ENCODE measurements at regions of chr6 and their contacts with region 1.

Region 1: GRCh38 chr6:33711140-33712129 is at the start of gene UQCC2:
- DNase-seq: peak; percentile 95 to 96
- H3K4me3 ChIP-seq: peak within 1 kb of the TSS; percentile 68
- H3K4me3 Mint-ChIP-seq: peak within 1 kb of the TSS; percentile 93
- H3K27ac Mint-ChIP-seq: peak within 1 kb of the TSS; percentile 100
- H3K4me1 ChIP-seq: peaks cover 15% of the 10 kb centered on the region
- H3K4me1 Mint-ChIP-seq: peaks cover 14% of the 10 kb centered on the region
- H3K27me3 ChIP-seq: no peaks in the 10 kb centered on the region
- H3K27me3 Mint-ChIP-seq: no peaks in the 10 kb centered on the region
- CTCF ChIP-seq: peak; percentile 41 to 83
- total RNA-seq, gene UQCC2: 115 and 122 TPM in 2 replicates

Region 2: GRCh38 chr6:33579828-33580714 is 131.4 kb before region 1 on chr6 and contains the start of gene BAK1:
- CTCF ChIA-PET with region 1: interaction called, 11 read pairs
- POLR2A ChIA-PET with region 1: interaction called, 8 read pairs
- intact Hi-C with region 1: no loop called
- DNase-seq: peak; percentile 89 to 92
- H3K4me3 ChIP-seq: peak within 1 kb of the TSS; percentile 65
- H3K4me3 Mint-ChIP-seq: peak within 1 kb of the TSS; percentile 84
- H3K27ac Mint-ChIP-seq: peak within 1 kb of the TSS; percentile 53
- H3K4me1 ChIP-seq: peaks cover 10% of the 10 kb centered on the region
- H3K4me1 Mint-ChIP-seq: no peaks in the 10 kb centered on the region
- H3K27me3 ChIP-seq: no peaks in the 10 kb centered on the region
- H3K27me3 Mint-ChIP-seq: no peaks in the 10 kb centered on the region
- CTCF ChIP-seq: peak; percentile 55 to 72
- total RNA-seq, gene BAK1: 28.5 and 29.4 TPM in 2 replicates

Region 3: GRCh38 chr6:33700391-33701050 is 10.9 kb before region 1 on chr6:
- CTCF ChIA-PET with region 1: interaction called, 17 read pairs
- POLR2A ChIA-PET with region 1: interaction called, 5 read pairs
- intact Hi-C with region 1: no loop called
- DNase-seq: peak; percentile 74 to 77
- H3K4me3 ChIP-seq: no peak overlapping the region
- H3K4me3 Mint-ChIP-seq: no peak overlapping the region
- H3K27ac Mint-ChIP-seq: no peak overlapping the region
- H3K4me1 ChIP-seq: no peaks in the 10 kb centered on the region
- H3K4me1 Mint-ChIP-seq: no peaks in the 10 kb centered on the region
- H3K27me3 ChIP-seq: no peaks in the 10 kb centered on the region
- H3K27me3 Mint-ChIP-seq: no peaks in the 10 kb centered on the region
- CTCF ChIP-seq: peak; percentile 64 to 85

Region 4: GRCh38 chr6:33751771-33752645 is 40.6 kb after region 1 on chr6:
- CTCF ChIA-PET with region 1: interaction called, 18 read pairs
- POLR2A ChIA-PET with region 1: interaction called, 6 read pairs
- intact Hi-C with region 1: no loop called
- DNase-seq: peak; percentile 77 to 89
- H3K4me3 ChIP-seq: no peak overlapping the region
- H3K4me3 Mint-ChIP-seq: no peak overlapping the region
- H3K27ac Mint-ChIP-seq: no peak overlapping the region
- H3K4me1 ChIP-seq: peaks cover 30% of the 10 kb centered on the region
- H3K4me1 Mint-ChIP-seq: peaks cover 33% of the 10 kb centered on the region
- H3K27me3 ChIP-seq: no peaks in the 10 kb centered on the region
- H3K27me3 Mint-ChIP-seq: peaks cover 3% of the 10 kb centered on the region
- CTCF ChIP-seq: peak in 1 of 2 experiments; percentile 28

Region 5: DNA sequence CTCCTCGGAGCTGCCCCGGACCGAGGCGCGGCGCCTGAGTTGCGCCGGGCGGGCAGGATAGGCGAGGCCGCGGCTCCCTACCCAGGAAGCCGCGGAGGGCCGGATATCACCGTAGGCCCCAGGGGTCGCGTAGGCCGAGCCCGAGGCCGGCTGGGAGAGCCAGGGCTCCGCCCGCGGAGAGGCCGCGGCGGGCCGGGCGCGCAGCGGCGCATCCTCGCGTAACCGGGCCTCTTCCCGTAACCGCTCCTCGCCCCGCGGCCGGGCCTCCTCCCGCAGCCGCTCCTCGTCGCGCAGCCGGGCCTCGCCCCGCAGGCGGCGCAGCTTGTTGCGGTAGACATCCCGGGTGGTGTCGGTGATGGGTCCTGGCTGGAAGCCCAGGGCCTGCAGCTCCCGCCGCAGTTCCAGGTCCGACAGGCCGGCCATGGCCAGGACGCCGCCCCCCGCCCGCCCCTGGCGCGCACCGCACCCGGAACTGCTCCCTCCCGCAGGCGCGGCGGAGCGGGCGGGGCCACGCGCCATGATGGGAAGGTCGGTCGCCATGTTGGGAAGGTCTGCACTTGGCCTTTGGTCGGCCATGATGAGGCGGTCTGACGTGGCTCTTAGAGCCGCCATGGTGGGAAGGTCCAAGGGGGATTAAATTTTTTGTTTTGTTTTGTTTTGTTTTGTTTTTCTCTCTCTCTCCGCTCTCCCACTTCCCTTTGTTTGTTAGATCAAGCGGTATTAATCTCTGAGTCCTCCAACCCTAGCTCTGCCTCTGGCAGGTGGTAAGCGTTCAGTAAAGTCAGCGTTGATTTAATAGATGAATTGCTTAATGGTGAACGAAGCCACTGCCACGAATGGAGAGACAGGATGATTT is 77.5 kb after region 1 on chr6 and contains the start of gene LEMD2:
- CTCF ChIA-PET with region 1: interaction called, 8 read pairs
- POLR2A ChIA-PET with region 1: interaction called, 3 read pairs
- intact Hi-C with region 1: loop called (anchors 1 kb)
- DNase-seq: peak; percentile 87 to 95
- H3K4me3 ChIP-seq: peak within 1 kb of the TSS; percentile 78
- H3K4me3 Mint-ChIP-seq: peak within 1 kb of the TSS; percentile 95
- H3K27ac Mint-ChIP-seq: peak within 1 kb of the TSS; percentile 95
- H3K4me1 ChIP-seq: peaks cover 12% of the 10 kb centered on the region; the same call in 1 of the 2 replicates
- H3K4me1 Mint-ChIP-seq: no peaks in the 10 kb centered on the region
- H3K27me3 ChIP-seq: no peaks in the 10 kb centered on the region
- H3K27me3 Mint-ChIP-seq: peaks cover 4% of the 10 kb centered on the region
- CTCF ChIP-seq: no peak
- total RNA-seq, gene LEMD2: 52.9 and 53.2 TPM in 2 replicates

Measured in Caco-2 (cell line).